ENCODE measurements at regions of chr1 and their contacts with region 1.

Region 1: GRCh38 chr1:22416555-22417454 is 34.8 kb upstream of the ZBTB40 start:
- DNase-seq: peak; percentile 61
- ATAC-seq: peak; percentile 78
- H3K4me3 ChIP-seq: no peak overlapping the region
- H3K27ac ChIP-seq: no peak overlapping the region
- H3K4me1 ChIP-seq: peaks cover 16 to 38% of the 10 kb centered on the region in 2 experiments
- H3K27me3 ChIP-seq: no peaks in the 10 kb centered on the region
- CTCF ChIP-seq: peak; percentile 88 to 97 (median 96)
- POLR2A ChIP-seq: no peak
- RAD21 ChIP-seq: peak; percentile 98

Region 2: GRCh38 chr1:21659099-21659923 is 757.5 kb before region 1 on chr1:
- CTCF ChIA-PET with region 1: no interaction called
- POLR2A ChIA-PET with region 1: no interaction called
- RAD21 ChIA-PET with region 1: no interaction called
- intact Hi-C with region 1: loop called (anchors 5 kb)
- DNase-seq: peak; percentile 51
- ATAC-seq: peak; percentile 83
- H3K4me3 ChIP-seq: peak overlapping the region; percentile 31 to 51
- H3K27ac ChIP-seq: peak overlapping the region; percentile 29; the same call in 1 of the 2 replicates
- H3K4me1 ChIP-seq: peaks cover 5 to 26% of the 10 kb centered on the region in 2 experiments; a peak in 3 of 4 replicates
- H3K27me3 ChIP-seq: no peaks in the 10 kb centered on the region
- CTCF ChIP-seq: peak; percentile 82 to 89 (median 86); a peak in 5 of 6 replicates
- POLR2A ChIP-seq: no peak
- RAD21 ChIP-seq: peak; percentile 95

Region 3: GRCh38 chr1:22018583-22019559 is 397.9 kb before region 1 on chr1:
- CTCF ChIA-PET with region 1: interaction called, 4 read pairs
- POLR2A ChIA-PET with region 1: no interaction called
- RAD21 ChIA-PET with region 1: no interaction called
- intact Hi-C with region 1: loop called (anchors 2 kb)
- DNase-seq: no peak
- ATAC-seq: peak; percentile 41; the same call in 1 of the 2 replicates
- H3K4me3 ChIP-seq: no peak overlapping the region
- H3K27ac ChIP-seq: no peak overlapping the region
- H3K4me1 ChIP-seq: peaks cover 6 to 23% of the 10 kb centered on the region in 2 experiments
- H3K27me3 ChIP-seq: no peaks in the 10 kb centered on the region
- CTCF ChIP-seq: peak; percentile 21 to 56 (median 52); a peak in 4 of 6 replicates
- POLR2A ChIP-seq: no peak
- RAD21 ChIP-seq: peak; percentile 40

Region 4: DNA sequence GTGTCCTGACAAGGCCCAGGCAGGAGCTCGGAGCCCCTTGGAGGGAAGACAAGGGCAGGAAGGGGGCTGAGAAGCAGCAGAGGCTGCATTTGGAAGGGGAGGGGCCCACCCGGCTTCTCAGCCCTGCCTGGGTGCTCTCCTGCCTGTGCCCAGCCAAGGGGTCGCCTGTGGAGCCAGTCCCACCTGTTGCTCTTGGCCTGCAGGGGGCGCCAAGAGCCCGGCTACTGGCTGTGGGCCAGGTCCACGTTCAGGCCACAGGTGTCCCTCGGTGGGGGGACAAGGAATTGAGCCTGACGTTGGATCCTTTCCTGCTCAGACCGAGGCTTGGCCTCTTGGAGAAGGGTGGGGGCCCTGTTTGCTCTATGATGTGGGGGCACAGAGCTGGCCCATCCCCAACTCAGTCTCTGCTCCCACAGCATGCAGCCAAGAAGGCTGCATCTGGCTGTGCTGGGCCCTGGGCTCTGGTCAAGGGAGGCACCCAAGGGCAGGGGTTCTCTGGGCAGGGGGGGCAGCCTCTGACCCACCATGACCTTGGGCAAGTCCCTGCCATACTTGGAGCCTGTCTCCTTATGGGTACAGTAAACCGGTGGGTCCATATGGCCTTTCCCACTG is 284.8 kb before region 1 on chr1:
- CTCF ChIA-PET with region 1: interaction called, 17 read pairs
- POLR2A ChIA-PET with region 1: no interaction called
- RAD21 ChIA-PET with region 1: interaction called in 1 of 2 experiments, 3 read pairs
- intact Hi-C with region 1: loop called (anchors 1 kb)
- DNase-seq: peak; percentile 23
- ATAC-seq: peak; percentile 89
- H3K4me3 ChIP-seq: no peak overlapping the region
- H3K27ac ChIP-seq: no peak overlapping the region
- H3K4me1 ChIP-seq: peaks cover 5 to 13% of the 10 kb centered on the region in 2 experiments
- H3K27me3 ChIP-seq: no peaks in the 10 kb centered on the region
- CTCF ChIP-seq: peak; percentile 79 to 90 (median 86)
- POLR2A ChIP-seq: no peak
- RAD21 ChIP-seq: peak; percentile 97

Region 5: DNA sequence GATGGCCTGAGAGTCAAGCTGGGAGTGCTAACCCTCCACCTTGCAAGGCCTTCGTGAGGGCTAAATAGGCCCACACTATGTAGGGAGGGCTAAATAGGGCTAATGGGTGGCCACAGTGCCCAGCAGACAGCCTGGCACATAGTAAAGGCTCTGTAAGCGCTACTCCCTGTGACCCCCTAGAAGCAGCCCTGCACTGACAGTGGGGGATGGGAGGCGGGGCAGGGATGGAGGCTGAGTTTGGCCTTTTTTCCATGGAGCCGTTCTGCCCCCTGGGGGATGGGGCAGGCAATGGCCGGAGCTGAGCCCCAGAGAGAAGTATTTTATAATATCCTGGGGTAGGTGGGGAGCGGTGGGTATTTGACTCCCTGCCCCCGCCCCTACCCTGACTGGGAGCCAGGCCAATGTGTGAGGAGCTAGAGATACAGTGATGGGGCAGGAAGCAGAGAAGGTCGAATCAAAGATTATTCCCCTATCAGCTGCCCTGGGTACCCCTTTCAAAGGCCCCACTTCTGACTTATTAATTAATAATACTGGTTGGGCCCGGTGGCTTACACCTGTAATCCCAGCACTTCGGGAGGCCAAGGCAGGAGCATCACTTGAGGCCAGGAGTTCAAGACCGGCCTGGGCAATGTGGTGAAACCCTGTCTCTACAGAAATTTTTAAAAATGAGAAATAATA is 513.6 kb after region 1 on chr1:
- CTCF ChIA-PET with region 1: interaction called, 14 read pairs
- POLR2A ChIA-PET with region 1: no interaction called
- RAD21 ChIA-PET with region 1: no interaction called
- intact Hi-C with region 1: loop called (anchors 1 kb)
- DNase-seq: peak; percentile 41
- ATAC-seq: peak; percentile 96
- H3K4me3 ChIP-seq: no peak overlapping the region
- H3K27ac ChIP-seq: no peak overlapping the region
- H3K4me1 ChIP-seq: 0 out of 4 replicates have a peak, but pooled peaks cover 0 to 2% of the 10 kb centered on the region in 2 experiments
- H3K27me3 ChIP-seq: no peaks in the 10 kb centered on the region
- CTCF ChIP-seq: peak; percentile 92 to 93 (median 93)
- POLR2A ChIP-seq: no peak
- RAD21 ChIP-seq: peak; percentile 97